Sciatic nerve (tissue), 2 donors: ENCODE measurements at regions of chr7 and their contacts with region 1.

Region 1: DNA sequence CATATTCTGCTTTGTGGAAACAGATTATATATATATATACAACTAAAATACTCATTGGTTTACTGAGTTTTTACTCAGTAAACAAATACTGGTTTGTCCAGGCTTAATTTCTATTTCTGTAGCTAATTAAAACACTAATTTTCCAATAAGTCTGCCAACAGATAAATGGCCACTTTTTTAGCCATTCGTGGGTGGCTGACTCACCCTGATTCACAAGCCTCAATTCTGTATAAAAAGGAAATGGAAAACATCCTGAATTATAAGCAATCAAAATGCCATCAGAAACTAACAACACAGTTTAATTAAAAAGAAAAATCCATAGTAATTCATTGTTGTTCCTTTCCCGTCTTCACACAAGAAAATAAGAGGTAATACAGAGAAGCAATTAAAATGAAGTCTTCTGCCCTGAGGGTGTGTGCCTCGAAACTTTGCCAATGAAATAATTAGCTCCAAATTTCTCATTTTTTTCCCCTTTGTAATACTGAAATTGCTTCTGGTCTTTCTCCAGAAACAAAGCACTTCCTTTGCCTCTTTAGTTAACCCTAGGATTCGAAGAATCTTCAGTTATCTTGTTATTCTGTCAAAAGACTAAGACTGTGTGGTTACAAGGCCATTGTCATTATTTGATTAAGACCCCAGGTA is 118.7 kb upstream of the PTN start:
- DNase-seq: no peak
- ATAC-seq: no peak

Region 2: DNA sequence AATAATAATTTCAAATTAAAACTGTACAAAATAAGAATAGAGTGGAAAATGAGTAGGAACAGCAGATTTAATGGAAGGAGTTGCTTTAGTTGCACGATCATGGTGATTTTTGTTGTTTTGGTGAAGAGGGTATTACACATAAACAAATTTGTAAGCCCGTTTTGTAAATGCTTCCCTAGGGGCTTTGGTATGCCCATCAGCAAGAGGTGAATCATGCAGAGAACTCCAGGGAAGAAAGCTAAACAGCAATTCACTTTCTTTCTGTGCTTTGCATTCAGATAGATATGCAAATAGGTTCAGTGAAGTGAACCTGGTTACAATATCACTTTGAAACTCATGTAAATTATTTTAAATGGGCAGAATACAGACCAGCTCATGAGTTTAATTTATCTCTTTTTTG is 1062.8 kb before region 1 on chr7:
- intact Hi-C with region 1: loop called (anchors 5 kb)
- DNase-seq: no peak
- ATAC-seq: no peak

Region 3: GRCh38 chr7:137443616-137444015 is 18.6 kb before region 1 on chr7:
- intact Hi-C with region 1: no loop called
- DNase-seq: no peak
- ATAC-seq: no peak